Pancreas (tissue), 10 donors: ENCODE measurements at regions of chr2 and their contacts with region 1.

Region 1: DNA sequence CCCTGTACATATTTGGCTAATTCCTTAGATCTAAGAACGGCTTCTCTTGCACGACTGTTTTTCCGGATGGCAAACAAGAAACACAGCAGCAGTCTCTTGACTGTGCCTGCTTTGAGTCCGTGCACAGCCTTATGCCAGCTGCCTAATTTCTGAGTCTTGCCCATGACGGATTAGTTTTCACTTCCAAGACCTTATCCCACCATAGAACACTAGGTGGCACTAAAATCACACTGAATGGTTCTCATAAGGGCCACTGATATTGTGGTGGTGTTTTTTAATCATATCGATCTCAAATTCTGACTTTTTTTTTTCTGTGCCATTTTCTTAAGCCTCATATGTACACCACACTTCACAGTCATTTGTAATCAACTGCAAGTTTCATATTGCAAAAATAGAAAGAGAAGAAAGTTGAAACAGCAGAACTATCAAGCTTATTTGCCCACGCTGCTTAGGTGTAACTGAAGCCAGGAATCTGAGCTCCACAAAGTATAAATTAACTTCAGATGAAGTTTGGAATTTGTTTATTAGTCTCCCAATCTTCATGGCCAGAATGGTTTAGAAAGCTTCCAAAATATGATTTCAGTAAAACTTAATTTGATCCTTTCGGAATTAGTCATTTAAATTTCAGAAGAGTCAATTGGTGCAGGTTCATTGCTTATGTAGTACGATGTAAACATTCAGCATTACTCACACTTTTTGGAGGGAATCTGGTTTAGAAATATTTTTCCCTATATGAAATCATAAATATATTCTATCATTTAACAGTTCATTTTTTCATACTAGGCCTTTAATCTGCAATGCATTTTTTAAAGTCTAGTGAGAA is 45.5 kb upstream of the SCN7A start:
- DNase-seq: peak in 3 of 6 donors; percentile 21 to 46 (median 30)
- ATAC-seq: peak; percentile 85 to 99 (median 96)
- H3K4me3 ChIP-seq: no peak overlapping the region
- H3K27ac ChIP-seq: no peak overlapping the region
- H3K4me1 ChIP-seq: no peaks in the 10 kb centered on the region
- H3K27me3 ChIP-seq: no peaks in the 10 kb centered on the region
- CTCF ChIP-seq: peak; percentile 55 to 78 (median 72)

Region 2: DNA sequence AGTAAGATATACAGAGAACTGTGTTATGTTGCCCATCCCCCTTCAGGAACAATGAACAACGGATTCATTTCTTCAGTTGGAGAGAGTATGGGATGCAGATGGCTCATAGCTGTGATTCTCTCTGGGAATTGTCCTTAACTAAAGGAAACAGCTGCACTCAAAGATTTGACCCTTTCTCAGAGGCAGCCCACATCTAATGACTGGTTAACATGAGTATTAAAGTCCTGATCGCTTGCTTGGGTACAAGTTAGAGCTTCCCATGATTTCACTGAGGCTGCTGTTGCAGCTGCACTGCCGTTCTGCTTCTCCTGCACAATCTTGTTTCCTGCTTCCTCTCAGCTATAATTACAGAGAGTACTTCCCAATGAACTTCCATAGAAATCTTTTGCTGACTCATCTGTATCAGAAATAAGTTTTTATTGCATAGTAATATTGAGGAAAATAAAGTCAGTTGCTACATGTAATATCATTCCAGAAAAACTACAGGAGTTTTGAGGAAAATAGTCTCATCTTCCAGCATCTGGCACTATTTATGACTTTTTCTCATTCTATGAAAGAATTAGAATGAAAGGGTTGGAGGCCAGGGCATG is 151.0 kb before region 1 on chr2:
- intact Hi-C with region 1: no loop called
- DNase-seq: no peak
- ATAC-seq: no peak
- H3K4me3 ChIP-seq: no peak overlapping the region
- H3K27ac ChIP-seq: no peak overlapping the region
- H3K4me1 ChIP-seq: peaks cover 0 to 3% (median 0%) of the 10 kb centered on the region in 3 donors
- H3K27me3 ChIP-seq: no peaks in the 10 kb centered on the region
- CTCF ChIP-seq: no peak

Region 3: DNA sequence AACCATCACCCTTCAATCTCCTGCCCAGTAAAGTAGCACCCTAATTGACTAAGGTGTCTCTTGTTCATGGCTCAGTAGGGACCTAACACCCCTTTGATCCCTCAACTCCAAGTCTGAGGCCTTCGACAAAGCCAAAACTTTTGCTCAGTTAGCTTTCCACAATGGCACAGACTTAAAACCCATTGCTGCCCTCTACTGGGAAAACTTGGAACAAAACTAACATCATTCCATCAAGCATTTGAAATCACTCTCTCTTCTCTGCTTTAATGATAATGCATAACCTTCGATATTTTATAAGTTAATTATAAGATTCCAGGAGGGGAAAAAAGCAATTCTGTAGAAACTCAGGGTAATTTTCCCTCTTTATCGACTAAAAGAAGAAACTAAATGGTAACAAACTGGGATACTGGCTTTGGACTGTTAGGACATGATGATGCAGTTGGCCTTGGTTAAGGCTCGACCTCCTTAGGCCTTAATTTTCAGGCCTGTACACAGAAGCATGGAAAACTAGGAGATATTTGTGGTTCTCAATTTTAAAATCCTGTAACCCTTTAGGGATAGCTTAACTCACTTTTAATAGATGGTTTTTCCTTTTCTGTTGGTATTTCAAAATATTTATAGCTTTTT is 1580.1 kb after region 1 on chr2:
- intact Hi-C with region 1: loop called in 1 of 3 experiments (anchors 10 kb)
- DNase-seq: peak in 1 of 6 donors; percentile 6
- ATAC-seq: peak; percentile 72 to 87 (median 84)
- H3K4me3 ChIP-seq: no peak overlapping the region
- H3K27ac ChIP-seq: no peak overlapping the region
- H3K4me1 ChIP-seq: peaks cover 0 to 2% (median 0%) of the 10 kb centered on the region in 3 donors
- H3K27me3 ChIP-seq: no peaks in the 10 kb centered on the region
- CTCF ChIP-seq: peak in 3 of 4 donors; percentile 32 to 52 (median 36)